ENCODE measurements at regions of chr12 and their contacts with region 1.

Region 1: DNA sequence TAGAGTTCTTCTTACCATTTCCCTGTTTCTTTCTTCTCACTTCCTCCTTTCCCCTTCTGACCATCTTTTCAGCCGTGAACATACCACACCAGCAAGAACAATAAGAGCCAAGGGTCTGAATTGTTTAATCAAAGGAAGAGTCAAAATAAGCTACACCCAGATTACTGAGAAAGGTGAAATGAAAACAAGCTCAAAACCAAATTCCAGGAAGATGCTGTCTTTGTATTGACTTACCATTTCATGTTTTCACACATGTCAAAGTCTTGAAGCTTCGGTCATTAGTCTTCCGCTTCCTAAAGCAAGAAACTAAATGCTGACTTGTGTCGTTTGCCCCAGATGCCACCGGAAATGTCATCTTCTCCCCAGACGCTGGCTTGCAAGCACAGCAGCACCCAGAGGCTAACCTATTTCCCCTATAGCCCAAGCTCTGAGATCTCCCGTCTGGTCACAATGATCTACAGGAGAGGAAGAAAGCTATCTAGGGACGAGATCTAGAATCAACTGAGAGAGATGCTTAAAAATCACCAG is 136.5 kb upstream of the AMIGO2 start:
- DNase-seq: peak; percentile 34 to 92 (median 64)
- ATAC-seq: peak; percentile 57
- H3K4me3 ChIP-seq: peak overlapping the region; percentile 71
- H3K4me3 Mint-ChIP-seq: peak overlapping the region; percentile 99
- H3K27ac ChIP-seq: peak overlapping the region; percentile 43 to 68
- H3K27ac Mint-ChIP-seq: peak overlapping the region; percentile 96
- H3K4me1 ChIP-seq: peaks cover 32% of the 10 kb centered on the region
- H3K4me1 Mint-ChIP-seq: peaks cover 78% of the 10 kb centered on the region
- H3K27me3 ChIP-seq: no peaks in the 10 kb centered on the region
- H3K27me3 Mint-ChIP-seq: no peaks in the 10 kb centered on the region
- CTCF ChIP-seq: no peak

Region 2: DNA sequence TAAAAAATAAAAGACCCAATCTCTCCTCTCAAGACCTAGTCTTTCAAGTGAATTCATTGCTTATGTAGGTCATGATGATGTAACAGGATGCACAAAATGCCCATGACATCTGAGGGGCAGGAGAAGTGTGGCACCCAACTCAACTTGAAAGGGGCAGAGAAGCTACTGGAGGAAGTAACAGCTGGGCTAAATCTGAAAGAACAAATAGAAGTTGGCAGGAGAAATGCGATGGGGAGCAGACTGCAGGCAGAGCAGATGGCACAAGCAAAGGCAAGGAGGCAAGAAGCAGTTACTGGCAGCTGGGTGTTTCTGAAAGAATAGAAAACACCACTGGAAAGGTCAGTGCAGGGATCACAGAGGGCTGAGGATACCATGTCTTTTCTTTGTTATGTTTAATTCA is 405.0 kb before region 1 on chr12:
- CTCF ChIA-PET with region 1: no interaction called
- POLR2A ChIA-PET with region 1: no interaction called
- intact Hi-C with region 1: no loop called
- DNase-seq: peak in 2 of 14 experiments; percentile 4 to 25
- ATAC-seq: peak; percentile 26
- H3K4me3 ChIP-seq: no peak overlapping the region
- H3K4me3 Mint-ChIP-seq: no peak overlapping the region
- H3K27ac ChIP-seq: no peak overlapping the region
- H3K27ac Mint-ChIP-seq: no peak overlapping the region
- H3K4me1 ChIP-seq: no peaks in the 10 kb centered on the region
- H3K4me1 Mint-ChIP-seq: peaks cover 6% of the 10 kb centered on the region
- H3K27me3 ChIP-seq: no peaks in the 10 kb centered on the region
- H3K27me3 Mint-ChIP-seq: peaks cover 6% of the 10 kb centered on the region
- CTCF ChIP-seq: no peak

Region 3: DNA sequence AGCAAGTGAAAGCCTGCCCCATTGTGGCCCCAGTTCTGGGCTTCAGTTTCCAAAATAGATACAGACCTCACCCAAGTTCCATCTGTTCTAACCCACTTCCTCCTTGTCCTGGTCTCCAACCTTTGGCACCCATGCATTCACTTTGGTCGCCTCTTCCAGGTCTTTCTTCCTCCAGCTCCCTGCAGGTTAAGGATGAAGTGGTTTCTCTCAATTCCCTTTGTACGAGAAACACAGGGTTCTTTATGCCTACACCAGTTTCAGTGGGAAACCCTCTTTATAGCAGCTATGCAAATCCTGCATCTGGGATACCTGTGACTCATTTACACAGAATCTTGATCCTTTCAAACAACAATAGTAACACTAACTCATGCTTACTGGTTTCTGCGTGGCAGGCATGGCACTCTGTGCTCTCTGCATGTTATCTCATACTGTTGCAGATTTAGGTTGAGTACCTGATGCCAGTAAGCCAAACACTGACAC is 25.9 kb before region 1 on chr12:
- CTCF ChIA-PET with region 1: interaction called, 6 read pairs
- POLR2A ChIA-PET with region 1: interaction called, 61 read pairs
- intact Hi-C with region 1: no loop called
- DNase-seq: peak in 1 of 14 experiments; percentile 37
- ATAC-seq: no peak
- H3K4me3 ChIP-seq: no peak overlapping the region
- H3K4me3 Mint-ChIP-seq: no peak overlapping the region
- H3K27ac ChIP-seq: peak overlapping the region; percentile 14 to 16
- H3K27ac Mint-ChIP-seq: peak overlapping the region; percentile 87
- H3K4me1 ChIP-seq: peaks cover 63% of the 10 kb centered on the region
- H3K4me1 Mint-ChIP-seq: peaks cover 90% of the 10 kb centered on the region
- H3K27me3 ChIP-seq: no peaks in the 10 kb centered on the region
- H3K27me3 Mint-ChIP-seq: no peaks in the 10 kb centered on the region
- CTCF ChIP-seq: no peak

Region 4: GRCh38 chr12:47270782-47271664 is 54.8 kb after region 1 on chr12:
- CTCF ChIA-PET with region 1: no interaction called
- POLR2A ChIA-PET with region 1: interaction called, 70 read pairs
- intact Hi-C with region 1: loop called in 1 of 2 experiments (anchors 2 kb)
- DNase-seq: peak in 1 of 14 experiments; percentile 27
- ATAC-seq: peak; percentile 79
- H3K4me3 ChIP-seq: no peak overlapping the region
- H3K4me3 Mint-ChIP-seq: peak overlapping the region; percentile 18
- H3K27ac ChIP-seq: no peak overlapping the region
- H3K27ac Mint-ChIP-seq: peak overlapping the region; percentile 66
- H3K4me1 ChIP-seq: peaks cover 44% of the 10 kb centered on the region
- H3K4me1 Mint-ChIP-seq: peaks cover 78% of the 10 kb centered on the region
- H3K27me3 ChIP-seq: no peaks in the 10 kb centered on the region
- H3K27me3 Mint-ChIP-seq: no peaks in the 10 kb centered on the region
- CTCF ChIP-seq: no peak

Region 5: GRCh38 chr12:47361389-47362021 is 145.3 kb after region 1 on chr12:
- CTCF ChIA-PET with region 1: no interaction called
- POLR2A ChIA-PET with region 1: interaction called, 17 read pairs
- intact Hi-C with region 1: loop called in 1 of 2 experiments (anchors 5 kb)
- DNase-seq: peak in 11 of 14 experiments; percentile 3 to 74 (median 37)
- ATAC-seq: peak; percentile 41
- H3K4me3 ChIP-seq: peak overlapping the region; percentile 40
- H3K4me3 Mint-ChIP-seq: peak overlapping the region; percentile 86
- H3K27ac ChIP-seq: peak overlapping the region; percentile 67 to 75
- H3K27ac Mint-ChIP-seq: peak overlapping the region; percentile 98
- H3K4me1 ChIP-seq: peaks cover 56% of the 10 kb centered on the region
- H3K4me1 Mint-ChIP-seq: peaks cover 65% of the 10 kb centered on the region
- H3K27me3 ChIP-seq: no peaks in the 10 kb centered on the region
- H3K27me3 Mint-ChIP-seq: no peaks in the 10 kb centered on the region
- CTCF ChIP-seq: no peak